SK-N-SH (cell line): ENCODE measurements at regions of chr2 and their contacts with region 1.

Region 1: DNA sequence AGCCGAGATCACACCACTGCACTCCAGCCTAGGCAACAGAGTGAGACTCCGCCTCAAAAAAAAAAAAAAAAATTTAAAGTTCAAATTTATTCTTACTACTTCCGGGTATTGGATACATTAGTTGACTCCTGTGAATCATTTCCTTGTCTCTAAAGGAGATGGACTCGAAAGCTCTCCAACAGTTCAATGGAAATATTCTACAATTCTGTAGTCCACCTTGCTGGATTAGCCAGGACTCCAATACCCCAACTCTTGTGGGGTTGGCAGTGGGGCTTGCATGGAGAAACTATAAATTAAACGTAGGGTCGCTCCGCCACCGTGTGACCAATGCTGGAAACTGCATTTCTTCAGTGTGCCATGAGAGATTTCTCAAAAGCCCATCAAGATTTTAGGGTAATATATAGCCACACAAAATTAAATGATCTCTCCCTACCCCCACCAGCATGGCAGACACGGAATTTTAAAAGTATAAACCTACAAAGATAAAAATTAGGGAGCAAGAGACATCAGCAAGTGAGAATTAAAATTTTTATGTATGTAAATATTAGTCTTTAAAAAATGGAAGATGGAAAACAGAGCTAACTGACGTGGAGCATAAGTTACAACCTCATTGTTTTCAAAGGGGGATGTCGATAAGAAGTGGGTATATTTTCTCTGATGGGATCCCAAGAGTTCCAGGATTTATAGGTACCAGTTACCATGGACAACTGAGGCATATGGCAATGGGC is 27.8 kb upstream of the GAREM2 start:
- DNase-seq: peak; percentile 85
- H3K4me3 ChIP-seq: no peak overlapping the region
- H3K27ac ChIP-seq: no peak overlapping the region
- H3K4me1 ChIP-seq: no peaks in the 10 kb centered on the region; a peak in 1 of 4 replicates
- H3K27me3 ChIP-seq: no peaks in the 10 kb centered on the region; the same call in 1 of the 2 replicates
- CTCF ChIP-seq: peak; percentile 96
- EP300 ChIP-seq: no peak
- RAD21 ChIP-seq: peak; percentile 100

Region 2: GRCh38 chr2:25738383-25739343 is 406.5 kb before region 1 on chr2:
- CTCF ChIA-PET with region 1: no interaction called
- POLR2A ChIA-PET with region 1: no interaction called
- DNase-seq: no peak
- H3K4me3 ChIP-seq: no peak overlapping the region
- H3K27ac ChIP-seq: no peak overlapping the region
- H3K4me1 ChIP-seq: no peaks in the 10 kb centered on the region; a peak in 1 of 4 replicates
- H3K27me3 ChIP-seq: no peaks in the 10 kb centered on the region
- CTCF ChIP-seq: no peak
- EP300 ChIP-seq: no peak
- RAD21 ChIP-seq: no peak

Region 3: GRCh38 chr2:25951071-25951547 is 194.0 kb before region 1 on chr2:
- CTCF ChIA-PET with region 1: interaction called, 78 read pairs
- POLR2A ChIA-PET with region 1: no interaction called
- DNase-seq: peak; percentile 91
- H3K4me3 ChIP-seq: no peak overlapping the region; a peak in 1 of 4 replicates
- H3K27ac ChIP-seq: peak overlapping the region in 1 of 2 experiments; percentile 86; a peak in 2 of 4 replicates
- H3K4me1 ChIP-seq: peaks cover 5 to 7% of the 10 kb centered on the region in 2 experiments; a peak in 1 of 4 replicates
- H3K27me3 ChIP-seq: no peaks in the 10 kb centered on the region
- CTCF ChIP-seq: peak; percentile 99
- EP300 ChIP-seq: peak in 1 of 2 experiments; percentile 73; a peak in 1 of 4 replicates
- RAD21 ChIP-seq: peak; percentile 100

Region 4: DNA sequence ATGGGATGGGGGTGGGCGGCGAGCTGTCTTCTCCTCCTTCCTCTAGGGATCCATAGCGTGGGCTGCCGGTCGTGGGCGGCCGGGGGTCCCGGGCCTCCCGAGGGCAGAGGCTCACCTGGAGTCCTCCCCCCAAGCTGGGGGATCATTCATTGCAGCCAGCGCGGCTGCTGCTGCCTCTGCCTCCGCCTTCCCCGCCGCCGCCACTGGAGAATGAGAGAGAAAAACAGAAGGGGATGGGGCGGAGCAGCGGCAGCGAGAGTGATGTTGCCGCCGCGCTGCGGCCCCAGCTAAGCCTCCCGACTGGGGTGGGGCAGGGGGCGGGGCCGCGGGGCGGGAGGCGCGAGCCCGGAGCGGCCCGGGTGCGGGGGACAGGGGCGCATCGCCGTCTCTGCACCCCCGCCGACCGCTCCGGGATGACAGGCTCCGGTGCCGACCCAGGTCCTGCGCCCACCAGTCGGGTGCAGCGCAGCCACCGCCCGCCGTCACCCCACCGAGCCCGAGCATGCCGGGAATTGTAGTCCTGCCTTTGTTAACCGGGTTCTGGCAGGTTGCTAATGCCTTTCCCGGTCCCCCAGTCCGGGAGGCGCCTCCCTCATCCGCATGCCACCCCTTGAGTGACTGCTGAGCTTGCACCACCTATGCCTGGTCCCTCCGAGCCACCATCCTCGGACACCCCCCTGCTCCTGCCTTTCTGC is 162.7 kb before region 1 on chr2 and contains the start of gene KIF3C:
- CTCF ChIA-PET with region 1: interaction called, 96 read pairs
- POLR2A ChIA-PET with region 1: no interaction called
- DNase-seq: peak; percentile 95
- H3K4me3 ChIP-seq: peak within 1 kb of the TSS; percentile 84 to 90
- H3K27ac ChIP-seq: peak within 1 kb of the TSS; percentile 40 to 87
- H3K4me1 ChIP-seq: peaks cover 38 to 47% of the 10 kb centered on the region in 2 experiments
- H3K27me3 ChIP-seq: no peaks in the 10 kb centered on the region
- CTCF ChIP-seq: 0 out of 2 replicates have a peak, but pooled peaks have one; percentile 0
- EP300 ChIP-seq: no peak
- RAD21 ChIP-seq: no peak
- polyA plus RNA-seq, gene KIF3C: 18.6 and 29.5 TPM in 2 replicates

Region 5: GRCh38 chr2:26018176-26018716 is 126.9 kb before region 1 on chr2:
- CTCF ChIA-PET with region 1: interaction called, 10 read pairs
- POLR2A ChIA-PET with region 1: no interaction called
- DNase-seq: peak; percentile 52
- H3K4me3 ChIP-seq: no peak overlapping the region
- H3K27ac ChIP-seq: peak overlapping the region; percentile 11 to 70; a peak in 3 of 4 replicates
- H3K4me1 ChIP-seq: peaks cover 7 to 15% of the 10 kb centered on the region in 2 experiments; a peak in 3 of 4 replicates
- H3K27me3 ChIP-seq: no peaks in the 10 kb centered on the region
- CTCF ChIP-seq: no peak
- EP300 ChIP-seq: no peak; a peak in 1 of 4 replicates
- RAD21 ChIP-seq: no peak

Region 6: DNA sequence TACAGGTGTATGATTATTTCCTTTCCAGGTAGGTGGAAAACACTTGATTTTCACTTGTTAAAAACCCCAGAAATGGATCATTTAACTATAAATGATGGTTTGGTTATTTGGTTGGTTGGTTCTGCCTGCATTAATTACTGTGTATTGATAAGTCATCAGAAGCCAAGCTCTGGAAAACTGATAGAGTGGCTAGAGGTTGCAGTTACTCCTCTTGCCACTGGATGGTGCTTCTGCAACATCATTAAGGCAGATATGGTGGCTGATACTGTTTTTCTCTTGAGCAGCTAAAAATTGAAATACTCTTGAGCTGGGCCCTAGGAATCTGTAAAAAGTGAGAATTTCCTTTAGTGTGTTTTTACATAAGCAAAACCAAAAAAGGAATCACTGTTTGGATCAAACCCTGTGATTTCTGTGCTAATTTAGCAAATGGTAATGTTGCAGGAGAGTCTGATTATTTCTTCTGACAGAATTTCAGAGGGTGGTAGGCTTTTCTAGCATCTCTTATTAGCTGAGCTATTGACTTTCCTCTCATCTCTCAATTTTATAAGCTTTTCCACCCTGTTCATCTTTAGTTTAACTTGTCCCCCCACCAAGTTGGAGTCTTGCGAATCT is 57.0 kb before region 1 on chr2:
- CTCF ChIA-PET with region 1: interaction called, 74 read pairs
- POLR2A ChIA-PET with region 1: interaction called, 5 read pairs
- DNase-seq: peak; percentile 66
- H3K4me3 ChIP-seq: no peak overlapping the region; a peak in 1 of 4 replicates
- H3K27ac ChIP-seq: no peak overlapping the region
- H3K4me1 ChIP-seq: peaks cover 0 to 8% of the 10 kb centered on the region in 2 experiments; a peak in 2 of 4 replicates
- H3K27me3 ChIP-seq: no peaks in the 10 kb centered on the region
- CTCF ChIP-seq: peak; percentile 80
- EP300 ChIP-seq: no peak
- RAD21 ChIP-seq: peak; percentile 89

Region 7: GRCh38 chr2:26118682-26119081 is 26.4 kb before region 1 on chr2:
- CTCF ChIA-PET with region 1: interaction called, 14 read pairs
- POLR2A ChIA-PET with region 1: no interaction called
- DNase-seq: no peak
- H3K4me3 ChIP-seq: no peak overlapping the region
- H3K27ac ChIP-seq: no peak overlapping the region
- H3K4me1 ChIP-seq: no peaks in the 10 kb centered on the region
- H3K27me3 ChIP-seq: no peaks in the 10 kb centered on the region
- CTCF ChIP-seq: no peak
- EP300 ChIP-seq: no peak
- RAD21 ChIP-seq: no peak